ENCODE measurements at regions of chr4 and their contacts with region 1.

Region 1: DNA sequence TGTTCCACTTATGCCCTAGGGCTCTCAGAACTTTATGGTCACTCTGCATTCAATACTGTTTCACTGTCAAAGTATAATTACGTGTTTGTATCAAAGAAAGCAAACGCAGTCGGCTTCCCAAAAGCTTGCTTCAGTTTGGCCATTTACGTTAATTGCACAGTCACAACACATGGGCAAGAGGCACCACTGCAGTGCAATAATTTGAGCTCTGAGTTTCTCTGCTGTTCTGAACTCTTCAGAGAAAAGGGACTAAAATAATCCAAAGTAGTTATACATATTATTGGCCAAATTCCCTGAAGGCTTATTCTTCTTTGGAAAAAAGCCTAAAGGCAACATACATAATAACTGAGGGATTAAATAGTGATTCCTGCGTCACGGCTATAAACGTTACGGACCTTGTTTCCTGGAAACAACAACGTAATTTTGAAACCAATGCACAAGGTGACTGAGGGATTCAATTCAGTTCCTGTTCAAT is 51.3 kb downstream of the RNF150 start:
- DNase-seq: no peak
- ATAC-seq: peak in 3 of 4 donors; percentile 45 to 66 (median 62)
- H3K4me3 ChIP-seq: peak overlapping the region; percentile 60
- H3K27ac ChIP-seq: peak overlapping the region; percentile 46
- H3K4me1 ChIP-seq: peaks cover 37% of the 10 kb centered on the region
- H3K27me3 ChIP-seq: no peaks in the 10 kb centered on the region
- CTCF ChIP-seq: no peak

Region 2: DNA sequence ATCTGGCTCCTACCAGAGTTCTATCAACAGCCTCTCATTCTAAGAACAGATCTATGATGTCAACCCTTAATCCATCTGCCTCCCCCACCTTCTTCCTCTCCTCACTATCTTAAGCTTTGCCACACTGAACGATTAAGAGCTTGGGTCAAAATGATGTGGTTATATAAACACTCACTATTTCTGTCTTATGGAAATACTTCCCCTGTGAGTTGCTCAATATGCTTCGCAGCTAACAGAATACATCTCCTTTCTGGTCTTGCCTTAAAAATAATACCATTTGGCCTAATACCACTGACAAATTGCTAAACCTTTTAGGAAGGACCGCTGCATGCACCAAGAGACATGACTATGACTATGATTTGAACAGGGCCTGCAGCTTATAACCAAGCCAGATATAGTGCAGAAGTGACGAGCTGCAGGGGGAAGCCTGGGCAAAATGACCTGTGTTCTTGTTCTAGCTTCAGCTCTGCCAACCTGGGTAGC is 79.6 kb before region 1 on chr4:
- intact Hi-C with region 1: loop called in 1 of 2 experiments (anchors 10 kb)
- DNase-seq: no peak
- ATAC-seq: peak; percentile 84 to 96 (median 93)
- H3K4me3 ChIP-seq: peak overlapping the region; percentile 44
- H3K27ac ChIP-seq: peak overlapping the region; percentile 85
- H3K4me1 ChIP-seq: peaks cover 30% of the 10 kb centered on the region
- H3K27me3 ChIP-seq: no peaks in the 10 kb centered on the region
- CTCF ChIP-seq: no peak

Region 3: GRCh38 chr4:141041021-141041476 is 40.9 kb before region 1 on chr4:
- intact Hi-C with region 1: loop called in 1 of 2 experiments (anchors 5 kb)
- DNase-seq: no peak
- ATAC-seq: no peak
- H3K4me3 ChIP-seq: no peak overlapping the region
- H3K27ac ChIP-seq: no peak overlapping the region
- H3K4me1 ChIP-seq: no peaks in the 10 kb centered on the region
- H3K27me3 ChIP-seq: no peaks in the 10 kb centered on the region
- CTCF ChIP-seq: no peak

Region 4: DNA sequence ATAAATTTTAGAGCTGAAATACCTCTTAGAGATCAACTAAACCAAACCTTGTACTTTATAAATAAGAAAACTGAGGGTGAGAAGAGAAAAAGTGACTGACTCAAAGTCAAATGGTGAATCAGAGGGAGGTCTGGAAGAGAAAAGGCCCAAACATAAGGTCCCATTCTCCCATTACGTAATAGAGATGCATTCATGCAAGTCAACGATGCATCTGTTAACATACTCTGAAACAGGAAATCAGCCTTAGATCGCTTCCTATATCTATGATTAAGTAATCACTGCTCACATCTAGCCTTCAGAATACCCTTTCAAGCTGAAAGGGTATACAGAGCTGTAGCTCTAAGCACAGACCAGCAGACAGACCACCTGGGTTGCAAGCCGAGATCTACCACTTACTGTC is 44.8 kb after region 1 on chr4:
- intact Hi-C with region 1: loop called in 1 of 2 experiments (anchors 5 kb)
- DNase-seq: no peak
- ATAC-seq: no peak
- H3K4me3 ChIP-seq: no peak overlapping the region
- H3K27ac ChIP-seq: no peak overlapping the region
- H3K4me1 ChIP-seq: peaks cover 43% of the 10 kb centered on the region
- H3K27me3 ChIP-seq: no peaks in the 10 kb centered on the region
- CTCF ChIP-seq: no peak

Measured in psoas muscle (tissue), 8 donors.